ENCODE measurements at regions of chr6 and their contacts with region 1.

Region 1: DNA sequence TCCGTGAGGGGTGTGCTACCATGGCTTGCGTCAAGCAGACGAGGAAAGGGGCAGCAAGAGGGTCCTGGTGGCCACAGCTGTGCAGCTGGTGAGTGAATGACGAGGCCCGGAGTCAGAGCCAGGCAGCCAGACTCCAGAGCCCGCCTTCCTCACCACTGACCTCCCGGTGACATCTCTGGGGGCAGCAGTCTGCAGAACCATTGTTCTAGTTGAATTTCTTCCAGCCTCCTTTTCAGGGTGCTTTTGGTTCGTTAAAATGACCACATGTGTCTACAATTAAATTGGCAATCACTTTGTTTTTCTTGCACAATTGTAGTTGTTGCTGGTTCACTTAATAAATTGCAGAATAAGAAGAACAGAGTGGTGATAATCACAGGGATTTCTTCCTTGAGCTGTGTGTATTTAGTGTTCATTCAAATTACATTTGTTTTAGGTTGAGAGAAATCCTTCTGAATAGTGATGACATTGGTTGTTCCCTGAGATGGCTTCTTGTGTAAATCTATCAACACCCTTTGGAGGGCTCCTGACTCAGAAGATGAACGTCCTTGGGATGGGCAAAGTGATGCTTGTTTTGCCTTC is 96.4 kb downstream of the TULP4 start:
- DNase-seq: no peak
- ATAC-seq: no peak
- H3K4me3 Mint-ChIP-seq: no peak overlapping the region
- H3K27ac Mint-ChIP-seq: no peak overlapping the region
- H3K4me1 Mint-ChIP-seq: peaks cover 6% of the 10 kb centered on the region
- H3K27me3 Mint-ChIP-seq: no peaks in the 10 kb centered on the region
- CTCF ChIP-seq: no peak

Region 2: DNA sequence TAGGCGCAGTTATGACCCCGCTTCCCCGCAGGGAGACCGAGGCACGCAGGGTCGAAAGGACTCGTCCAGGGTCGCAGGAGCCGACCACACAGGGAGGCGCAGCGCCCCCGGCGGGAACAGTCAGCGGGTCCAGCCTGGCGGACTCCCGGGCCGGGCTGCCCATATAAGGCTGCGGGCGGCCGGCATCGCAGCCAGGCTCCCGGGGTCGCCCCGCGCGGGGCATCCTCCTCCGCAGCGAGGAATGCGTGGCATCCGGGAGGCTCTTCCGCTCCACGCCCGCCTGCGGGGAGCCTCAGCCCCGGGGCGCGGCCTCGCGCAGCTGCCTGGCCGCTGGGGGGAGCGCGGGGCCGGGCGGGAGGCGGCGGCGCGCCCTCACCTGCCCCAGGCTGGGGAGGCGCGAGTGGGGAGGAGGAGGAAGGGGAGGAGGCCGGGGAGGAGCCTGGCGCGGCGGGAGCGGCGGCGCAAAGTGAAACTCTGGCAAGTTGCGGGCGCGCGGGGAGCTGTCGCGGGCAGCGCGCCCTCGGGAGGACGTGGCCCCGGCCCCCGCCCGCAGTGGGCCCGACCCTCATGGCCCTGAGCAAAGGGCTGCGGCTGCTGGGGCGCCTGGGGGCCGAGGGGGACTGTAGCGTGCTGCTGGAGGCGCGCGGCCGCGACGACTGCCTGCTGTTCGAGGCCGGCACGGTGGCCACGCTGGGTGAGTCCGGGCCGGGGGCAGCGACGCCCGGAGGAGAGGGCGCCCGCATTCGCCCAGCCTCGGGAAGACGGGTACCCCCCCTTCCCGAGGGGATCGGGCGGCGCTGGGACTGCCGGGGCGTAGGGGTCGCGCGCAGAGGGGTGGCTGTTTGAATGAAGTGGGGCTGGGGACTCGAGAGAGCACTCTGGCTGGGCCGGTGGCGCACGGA is 427.0 kb before region 1 on chr6 and contains the start of gene SYNJ2:
- CTCF ChIA-PET with region 1: no interaction called
- POLR2A ChIA-PET with region 1: no interaction called
- intact Hi-C with region 1: no loop called
- DNase-seq: peak; percentile 78
- ATAC-seq: peak; percentile 86
- H3K4me3 Mint-ChIP-seq: peak within 1 kb of the TSS; percentile 89
- H3K27ac Mint-ChIP-seq: peak within 1 kb of the TSS; percentile 77
- H3K4me1 Mint-ChIP-seq: peaks cover 43% of the 10 kb centered on the region
- H3K27me3 Mint-ChIP-seq: no peaks in the 10 kb centered on the region
- CTCF ChIP-seq: no peak
- total RNA-seq, gene SYNJ2: 20.7 and 25.0 TPM in 2 replicates

Region 3: GRCh38 chr6:158457616-158458278 is 49.1 kb after region 1 on chr6:
- CTCF ChIA-PET with region 1: no interaction called
- POLR2A ChIA-PET with region 1: no interaction called
- intact Hi-C with region 1: loop called (anchors 1 kb)
- DNase-seq: no peak
- ATAC-seq: no peak
- H3K4me3 Mint-ChIP-seq: no peak overlapping the region
- H3K27ac Mint-ChIP-seq: no peak overlapping the region
- H3K4me1 Mint-ChIP-seq: no peaks in the 10 kb centered on the region
- H3K27me3 Mint-ChIP-seq: no peaks in the 10 kb centered on the region
- CTCF ChIP-seq: no peak

Measured in activated B cell treated with CpG ODN at 0.5 μM for 24 hours (primary cell).